Activated naive CD4-positive, alpha-beta T cell treated with anti-CD3 and anti-CD28 coated beads for 36 hours (primary cell): ENCODE measurements at regions of chr1 and their contacts with region 1.

Region 1: DNA sequence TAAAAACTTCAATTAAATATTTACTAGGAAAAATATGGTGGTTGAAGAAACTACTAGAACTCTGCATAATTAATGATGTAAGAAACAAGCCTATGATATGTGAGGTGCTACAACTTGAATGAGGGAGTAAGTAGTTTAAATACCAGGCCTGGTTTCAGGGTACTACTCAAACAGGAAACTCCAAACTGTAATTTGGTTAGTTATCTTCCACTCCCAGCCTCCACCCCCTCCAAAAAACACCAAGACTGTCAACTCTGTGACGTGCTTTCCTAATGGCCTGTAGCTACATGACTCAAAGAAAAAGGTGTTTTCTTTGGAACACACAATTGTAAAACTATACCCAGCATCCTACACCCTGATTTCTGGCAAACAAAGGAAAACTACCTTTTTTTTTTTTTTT is 55.9 kb upstream of the RCC1 start:
- DNase-seq: peak; percentile 86
- H3K4me3 Mint-ChIP-seq: no peak overlapping the region
- H3K27ac Mint-ChIP-seq: peak overlapping the region; percentile 71
- H3K4me1 Mint-ChIP-seq: peaks cover 26% of the 10 kb centered on the region
- H3K27me3 Mint-ChIP-seq: no peaks in the 10 kb centered on the region

Region 2: GRCh38 chr1:28439320-28439719 is 10.6 kb before region 1 on chr1:
- CTCF ChIA-PET with region 1: interaction called, 3 read pairs
- intact Hi-C with region 1: loop called (anchors 1 kb)
- DNase-seq: no peak
- H3K4me3 Mint-ChIP-seq: no peak overlapping the region
- H3K27ac Mint-ChIP-seq: no peak overlapping the region
- H3K4me1 Mint-ChIP-seq: peaks cover 29% of the 10 kb centered on the region
- H3K27me3 Mint-ChIP-seq: no peaks in the 10 kb centered on the region